Activated B cell treated with CpG ODN at 0.5 μM for 24 hours (primary cell): ENCODE measurements at regions of chr3 and their contacts with region 1.

Region 1: GRCh38 chr3:72100601-72101187 is 315.7 kb upstream of the PROK2 start:
- DNase-seq: peak; percentile 91
- ATAC-seq: peak; percentile 60
- H3K4me3 Mint-ChIP-seq: peak overlapping the region; percentile 83
- H3K27ac Mint-ChIP-seq: peak overlapping the region; percentile 84
- H3K4me1 Mint-ChIP-seq: peaks cover 73% of the 10 kb centered on the region
- H3K27me3 Mint-ChIP-seq: no peaks in the 10 kb centered on the region
- CTCF ChIP-seq: no peak

Region 2: GRCh38 chr3:71984843-71985613 is 115.7 kb before region 1 on chr3:
- CTCF ChIA-PET with region 1: no interaction called
- POLR2A ChIA-PET with region 1: interaction called, 3 read pairs
- intact Hi-C with region 1: loop called (anchors 2 kb)
- DNase-seq: no peak
- ATAC-seq: peak; percentile 72
- H3K4me3 Mint-ChIP-seq: peak overlapping the region; percentile 62
- H3K27ac Mint-ChIP-seq: no peak overlapping the region
- H3K4me1 Mint-ChIP-seq: peaks cover 56% of the 10 kb centered on the region
- H3K27me3 Mint-ChIP-seq: peaks cover 17% of the 10 kb centered on the region
- CTCF ChIP-seq: no peak

Region 3: DNA sequence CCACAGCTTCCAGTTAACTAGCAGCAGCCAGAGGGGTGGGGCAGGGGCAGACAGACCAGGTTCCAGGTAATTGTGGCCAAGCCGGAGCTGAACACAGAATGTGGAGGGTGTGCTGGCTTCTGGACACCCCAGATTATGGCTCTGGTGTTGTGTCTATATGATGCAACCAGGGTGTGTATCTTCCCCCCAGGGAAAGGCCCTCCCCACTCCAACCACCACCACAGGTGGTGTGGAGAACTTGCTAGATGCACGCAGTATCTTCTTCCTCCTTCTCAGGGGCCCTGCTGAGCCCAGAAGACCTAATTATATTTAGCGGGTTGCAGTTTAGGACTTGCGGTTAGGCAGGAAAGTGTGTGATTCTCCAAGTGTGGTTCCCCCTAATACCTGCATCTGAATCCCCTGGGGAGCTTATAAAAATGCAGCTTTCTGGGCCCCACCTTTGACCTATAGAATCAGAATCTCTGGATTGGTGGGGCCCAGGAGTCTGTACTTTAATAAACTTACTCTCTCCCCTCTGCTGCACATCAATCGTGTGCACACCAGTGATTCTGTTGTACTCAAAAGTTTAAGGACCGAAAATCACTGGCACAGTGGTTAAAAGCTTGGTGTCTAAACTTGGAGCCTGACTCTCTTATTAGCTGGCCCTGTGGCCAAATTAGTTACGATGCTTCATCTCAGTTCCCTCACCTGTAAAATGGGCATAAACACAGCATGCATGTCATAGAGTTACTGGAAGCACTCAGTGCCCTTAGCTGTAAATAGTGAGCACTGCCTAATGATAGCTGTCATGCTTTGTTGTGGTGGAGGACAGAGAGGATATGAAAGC is 63.3 kb after region 1 on chr3:
- CTCF ChIA-PET with region 1: interaction called, 3 read pairs
- POLR2A ChIA-PET with region 1: interaction called, 22 read pairs
- intact Hi-C with region 1: loop called (anchors 1 kb)
- DNase-seq: peak; percentile 53
- ATAC-seq: peak; percentile 87
- H3K4me3 Mint-ChIP-seq: peak overlapping the region; percentile 64
- H3K27ac Mint-ChIP-seq: peak overlapping the region; percentile 81
- H3K4me1 Mint-ChIP-seq: peaks cover 52% of the 10 kb centered on the region
- H3K27me3 Mint-ChIP-seq: peaks cover 2% of the 10 kb centered on the region
- CTCF ChIP-seq: no peak

Region 4: DNA sequence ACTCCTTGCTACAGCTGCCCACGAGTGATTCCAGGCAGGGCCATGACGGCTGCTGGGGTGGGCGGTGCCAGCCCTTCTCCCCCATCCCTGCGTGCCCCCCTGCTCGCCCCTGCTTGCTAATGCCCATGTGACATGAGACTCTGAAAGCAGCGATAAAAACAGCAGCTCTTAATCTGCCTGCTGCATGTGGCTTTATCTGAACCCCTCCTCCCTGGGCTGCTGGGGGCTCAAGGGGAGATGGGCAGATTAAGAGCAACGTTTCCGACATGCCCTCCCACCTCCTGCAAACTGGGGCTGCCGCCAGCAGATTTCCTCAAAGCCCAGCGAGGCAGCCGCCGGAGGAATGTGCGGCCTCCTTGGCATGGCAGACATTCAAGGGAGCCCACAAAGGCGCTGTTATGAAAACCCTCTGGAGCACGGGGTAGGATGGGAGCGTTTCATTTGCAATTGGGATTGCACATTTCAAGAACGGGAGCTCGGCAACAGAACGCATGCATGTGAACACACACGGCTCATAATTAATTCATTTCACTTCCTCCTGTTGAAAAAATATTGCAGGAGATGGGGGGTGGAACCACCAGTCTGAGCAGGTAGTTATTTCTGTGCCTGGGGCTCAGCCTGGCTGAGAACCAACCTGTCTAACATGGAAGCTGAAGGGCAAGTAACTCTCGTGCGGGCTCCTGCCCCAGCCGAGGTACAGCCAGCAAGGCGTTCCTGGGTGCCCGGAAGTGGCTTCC is 188.4 kb after region 1 on chr3:
- CTCF ChIA-PET with region 1: no interaction called
- POLR2A ChIA-PET with region 1: no interaction called
- intact Hi-C with region 1: loop called (anchors 5 kb)
- DNase-seq: no peak
- ATAC-seq: peak; percentile 83
- H3K4me3 Mint-ChIP-seq: peak overlapping the region; percentile 78
- H3K27ac Mint-ChIP-seq: no peak overlapping the region
- H3K4me1 Mint-ChIP-seq: peaks cover 23% of the 10 kb centered on the region
- H3K27me3 Mint-ChIP-seq: no peaks in the 10 kb centered on the region
- CTCF ChIP-seq: no peak

Region 5: GRCh38 chr3:72538070-72538745 is 437.5 kb after region 1 on chr3:
- CTCF ChIA-PET with region 1: no interaction called
- POLR2A ChIA-PET with region 1: no interaction called
- intact Hi-C with region 1: no loop called
- DNase-seq: no peak
- ATAC-seq: peak; percentile 53
- H3K4me3 Mint-ChIP-seq: no peak overlapping the region
- H3K27ac Mint-ChIP-seq: peak overlapping the region; percentile 8
- H3K4me1 Mint-ChIP-seq: peaks cover 22% of the 10 kb centered on the region
- H3K27me3 Mint-ChIP-seq: peaks cover 8% of the 10 kb centered on the region
- CTCF ChIP-seq: no peak

Region 6: DNA sequence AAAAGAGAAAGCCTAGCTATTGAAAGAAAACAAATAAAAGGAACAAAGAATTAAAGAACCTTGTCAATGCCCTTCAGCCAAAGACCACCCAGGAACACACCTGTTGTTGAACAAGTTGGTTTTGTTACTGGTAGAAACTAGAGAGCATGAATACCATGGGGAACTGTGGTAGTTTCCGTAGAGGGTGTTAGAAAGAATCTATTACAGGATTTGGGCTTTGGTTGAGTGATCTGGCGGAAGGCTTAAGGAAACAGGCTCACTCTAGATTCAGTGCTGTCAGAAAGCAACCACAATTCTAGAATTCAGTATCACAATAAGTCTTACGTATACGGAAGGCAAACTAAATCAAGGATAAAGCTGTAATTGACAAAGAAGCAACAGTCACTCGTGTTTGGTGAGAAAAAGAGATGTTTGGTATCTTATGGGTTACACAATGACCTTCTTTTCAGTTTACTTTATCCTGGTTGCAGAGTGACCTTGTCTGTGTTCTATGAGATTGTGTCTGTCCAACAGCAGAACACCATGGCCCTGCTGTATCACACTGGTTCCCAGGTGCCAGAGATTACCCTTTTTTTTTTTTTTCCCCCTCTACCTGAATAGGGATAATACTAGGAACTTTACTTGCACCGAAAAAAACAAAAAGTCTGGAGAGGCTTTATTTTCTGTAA is 481.7 kb after region 1 on chr3:
- CTCF ChIA-PET with region 1: no interaction called
- POLR2A ChIA-PET with region 1: no interaction called
- intact Hi-C with region 1: loop called (anchors 5 kb)
- DNase-seq: no peak
- ATAC-seq: peak; percentile 94
- H3K4me3 Mint-ChIP-seq: peak overlapping the region; percentile 60
- H3K27ac Mint-ChIP-seq: peak overlapping the region; percentile 5
- H3K4me1 Mint-ChIP-seq: peaks cover 32% of the 10 kb centered on the region
- H3K27me3 Mint-ChIP-seq: peaks cover 48% of the 10 kb centered on the region
- CTCF ChIP-seq: no peak

Region 7: GRCh38 chr3:72996473-72997333 is 896.0 kb after region 1 on chr3 and contains the start of gene PPP4R2:
- CTCF ChIA-PET with region 1: no interaction called
- POLR2A ChIA-PET with region 1: no interaction called
- intact Hi-C with region 1: loop called (anchors 5 kb)
- DNase-seq: peak; percentile 96
- ATAC-seq: peak; percentile 90
- H3K4me3 Mint-ChIP-seq: peak within 1 kb of the TSS; percentile 89
- H3K27ac Mint-ChIP-seq: peak within 1 kb of the TSS; percentile 83
- H3K4me1 Mint-ChIP-seq: peaks cover 36% of the 10 kb centered on the region
- H3K27me3 Mint-ChIP-seq: no peaks in the 10 kb centered on the region
- CTCF ChIP-seq: no peak
- total RNA-seq, gene PPP4R2: 54.7 and 59.7 TPM in 2 replicates